ENCODE measurements at regions of chr5 and their contacts with region 1.

Region 1: DNA sequence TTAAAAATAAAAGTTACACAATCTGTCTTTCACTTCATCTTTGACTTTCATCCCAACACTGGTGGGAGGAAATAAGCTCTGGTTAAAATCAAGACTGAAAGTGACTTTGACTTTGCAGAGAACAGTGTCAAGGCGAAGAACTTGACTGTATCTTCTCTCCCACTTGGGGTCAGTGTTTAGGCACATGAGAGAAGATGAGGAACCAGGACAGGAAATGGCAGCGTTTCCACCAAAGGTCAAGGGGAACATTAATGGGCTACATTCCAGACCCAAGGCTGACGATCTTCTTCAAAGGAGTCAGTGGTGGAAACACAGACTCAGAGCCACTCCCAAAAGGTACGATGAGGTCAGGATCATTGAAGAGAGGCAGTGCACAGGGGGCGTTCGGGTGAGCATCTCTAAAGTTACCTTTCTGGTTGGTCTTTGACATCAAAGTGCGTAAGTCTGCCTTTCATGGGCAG is 409.6 kb downstream of the ARHGEF28 start:
- DNase-seq: peak; percentile 69 to 83
- H3K4me3 ChIP-seq: no peak overlapping the region
- H3K27ac ChIP-seq: peak overlapping the region; percentile 58
- H3K4me1 ChIP-seq: peaks cover 18% of the 10 kb centered on the region
- H3K27me3 ChIP-seq: no peaks in the 10 kb centered on the region
- CTCF ChIP-seq: peak; percentile 65

Region 2: GRCh38 chr5:73902327-73903051 is 133.1 kb before region 1 on chr5:
- CTCF ChIA-PET with region 1: no interaction called
- POLR2A ChIA-PET with region 1: no interaction called
- intact Hi-C with region 1: loop called (anchors 1 kb)
- DNase-seq: no peak
- H3K4me3 ChIP-seq: no peak overlapping the region
- H3K27ac ChIP-seq: peak overlapping the region; percentile 89
- H3K4me1 ChIP-seq: peaks cover 44% of the 10 kb centered on the region
- H3K27me3 ChIP-seq: no peaks in the 10 kb centered on the region
- CTCF ChIP-seq: peak; percentile 92

Region 3: DNA sequence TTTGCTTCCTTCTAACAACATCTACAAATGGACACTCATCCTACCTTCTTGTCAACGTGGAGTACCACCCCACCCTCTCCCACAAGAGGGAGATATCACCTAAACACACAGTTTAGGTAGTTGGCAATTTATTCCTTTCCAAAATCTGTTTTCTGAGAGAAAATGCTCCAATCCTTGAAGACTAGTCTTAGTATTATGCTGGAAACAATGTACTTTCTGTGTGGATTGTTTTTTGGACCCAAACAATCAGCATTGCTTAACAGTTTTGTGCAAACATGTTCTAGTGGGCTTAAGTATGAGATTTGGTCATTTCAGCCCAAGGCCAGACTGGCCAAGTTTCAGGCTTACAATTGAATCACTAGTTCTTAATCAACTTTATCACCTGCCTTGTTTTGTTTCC is 50.4 kb before region 1 on chr5:
- CTCF ChIA-PET with region 1: no interaction called
- POLR2A ChIA-PET with region 1: no interaction called
- intact Hi-C with region 1: loop called (anchors 1 kb)
- DNase-seq: peak; percentile 25 to 46
- H3K4me3 ChIP-seq: no peak overlapping the region
- H3K27ac ChIP-seq: no peak overlapping the region; the same call in 1 of the 2 replicates
- H3K4me1 ChIP-seq: no peaks in the 10 kb centered on the region; the same call in 1 of the 2 replicates
- H3K27me3 ChIP-seq: no peaks in the 10 kb centered on the region
- CTCF ChIP-seq: peak; percentile 73

Region 4: GRCh38 chr5:74201334-74202081 is 166.0 kb after region 1 on chr5:
- CTCF ChIA-PET with region 1: no interaction called
- POLR2A ChIA-PET with region 1: no interaction called
- intact Hi-C with region 1: loop called (anchors 1 kb)
- DNase-seq: peak; percentile 61 to 81
- H3K4me3 ChIP-seq: peak overlapping the region; percentile 29; the same call in 1 of the 2 replicates
- H3K27ac ChIP-seq: peak overlapping the region; percentile 91
- H3K4me1 ChIP-seq: peaks cover 44% of the 10 kb centered on the region
- H3K27me3 ChIP-seq: no peaks in the 10 kb centered on the region
- CTCF ChIP-seq: no peak

Region 5: DNA sequence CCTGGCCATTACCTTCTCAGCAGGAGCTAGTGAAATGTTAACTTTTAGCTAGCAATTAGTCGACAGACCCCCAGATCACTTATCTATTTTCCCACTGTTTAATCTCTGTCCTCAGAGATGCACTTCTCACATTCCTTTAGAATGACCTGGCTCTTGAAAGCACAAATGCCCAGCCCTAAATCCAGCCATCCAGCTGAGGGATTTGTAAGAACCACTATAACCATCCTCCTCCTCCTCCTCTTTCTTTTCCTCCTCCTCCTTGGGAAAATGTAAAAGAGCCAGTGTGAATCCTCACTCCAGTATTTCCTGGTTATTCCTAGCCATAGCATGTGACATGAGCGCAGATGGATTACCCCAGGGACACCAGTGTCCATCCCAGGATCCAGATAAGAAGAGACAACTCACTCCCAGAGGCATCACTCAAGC is 480.7 kb after region 1 on chr5:
- CTCF ChIA-PET with region 1: no interaction called
- POLR2A ChIA-PET with region 1: no interaction called
- intact Hi-C with region 1: loop called (anchors 1 kb)
- DNase-seq: no peak
- H3K4me3 ChIP-seq: no peak overlapping the region
- H3K27ac ChIP-seq: no peak overlapping the region
- H3K4me1 ChIP-seq: peaks cover 36% of the 10 kb centered on the region
- H3K27me3 ChIP-seq: no peaks in the 10 kb centered on the region
- CTCF ChIP-seq: no peak

Region 6: DNA sequence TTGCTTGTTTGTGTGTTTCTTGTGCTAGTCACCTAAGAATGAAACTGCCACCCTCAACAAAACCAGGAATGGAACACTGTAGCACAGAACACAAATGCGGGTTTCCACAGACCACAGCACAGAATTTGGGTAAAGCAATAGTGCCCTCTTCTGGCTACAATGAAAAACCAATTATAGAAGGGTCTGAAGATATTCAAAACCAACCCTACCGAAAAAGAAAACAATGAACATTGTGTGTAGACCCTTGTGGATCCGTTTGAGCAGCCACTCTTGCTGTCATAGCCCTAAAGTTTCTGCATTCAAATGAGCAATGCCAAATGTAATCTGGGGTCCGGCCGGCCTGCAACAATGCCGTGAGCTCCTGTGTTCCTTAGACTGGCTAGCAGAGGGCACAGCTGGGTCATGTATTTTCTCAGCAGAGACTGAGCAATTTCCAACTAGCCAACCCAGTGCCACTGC is 613.3 kb after region 1 on chr5:
- CTCF ChIA-PET with region 1: no interaction called
- POLR2A ChIA-PET with region 1: no interaction called
- intact Hi-C with region 1: loop called (anchors 1 kb)
- DNase-seq: peak in 1 of 2 experiments; percentile 57
- H3K4me3 ChIP-seq: no peak overlapping the region
- H3K27ac ChIP-seq: no peak overlapping the region
- H3K4me1 ChIP-seq: peaks cover 23% of the 10 kb centered on the region
- H3K27me3 ChIP-seq: no peaks in the 10 kb centered on the region
- CTCF ChIP-seq: peak; percentile 83